Sigmoid colon (tissue), 7 donors: ENCODE measurements at regions of chr11 and their contacts with region 1.

Region 1: DNA sequence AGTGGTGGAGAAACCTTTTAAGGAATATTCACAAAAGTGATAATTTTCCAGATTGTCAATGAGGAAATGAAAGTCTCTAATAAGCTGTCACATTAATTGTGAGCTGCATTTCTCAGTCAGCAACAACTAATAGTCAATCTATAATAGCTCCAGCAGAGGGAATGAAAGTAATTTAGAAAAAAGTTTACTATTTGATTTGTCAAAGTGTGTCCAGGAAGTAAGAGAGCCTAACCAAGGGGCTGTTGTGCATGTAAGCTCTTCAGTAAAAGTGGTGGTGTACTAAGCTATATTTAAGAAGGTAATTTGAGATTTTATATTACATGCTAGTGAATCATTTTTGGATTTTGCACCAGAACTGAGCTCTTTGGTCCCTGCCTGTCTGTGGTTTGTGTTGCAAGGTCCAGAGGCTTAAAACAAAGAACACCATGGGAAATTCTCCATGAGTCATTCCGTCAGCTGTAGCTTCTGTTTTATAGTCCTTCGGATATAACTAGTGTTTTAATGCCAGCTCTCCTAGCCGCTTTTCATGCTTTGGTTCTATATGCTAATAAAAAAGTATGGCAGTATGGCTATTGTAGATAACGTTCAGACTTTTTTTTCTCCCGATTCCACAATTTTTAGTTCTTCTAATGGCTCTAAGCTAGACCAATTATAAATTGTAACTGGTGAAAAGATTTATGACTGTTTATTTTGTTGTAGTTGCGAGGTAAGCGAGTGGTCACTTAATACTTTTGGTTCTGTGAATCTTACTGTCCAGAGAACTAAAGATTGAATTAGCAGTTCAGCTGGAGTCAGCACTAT is 64.6 kb downstream of the ARHGEF12 start:
- DNase-seq: no peak
- H3K4me3 ChIP-seq: peak overlapping the region; percentile 8 to 38 (median 32)
- H3K27ac ChIP-seq: peak overlapping the region in 3 of 4 donors; percentile 62 to 80 (median 74)
- H3K4me1 ChIP-seq: peaks cover 0 to 64% (median 39%) of the 10 kb centered on the region in 4 donors
- H3K27me3 ChIP-seq: no peaks in the 10 kb centered on the region
- CTCF ChIP-seq: no peak
- EP300 ChIP-seq: no peak
- POLR2A ChIP-seq: no peak

Region 2: DNA sequence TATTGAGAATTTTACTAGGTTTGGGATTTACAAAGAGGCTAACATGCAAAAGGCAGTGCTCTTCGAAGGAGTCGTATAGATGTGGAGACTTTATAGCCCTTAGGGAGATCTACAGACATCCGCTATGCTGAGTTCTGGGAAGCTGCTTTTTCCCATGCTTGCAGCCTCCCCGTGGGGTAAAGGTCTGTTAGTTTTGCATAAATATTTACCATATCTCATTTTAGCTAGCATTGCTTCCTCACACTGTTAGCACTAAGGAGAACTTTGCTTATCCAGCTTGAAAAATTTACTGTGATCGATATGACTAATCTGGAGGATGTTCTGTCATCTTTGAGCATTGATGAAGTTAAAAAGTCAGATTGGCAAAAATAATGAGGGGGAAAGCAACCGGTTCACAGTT is 46.0 kb before region 1 on chr11:
- intact Hi-C with region 1: loop called (anchors 5 kb)
- DNase-seq: no peak
- H3K4me3 ChIP-seq: no peak overlapping the region
- H3K27ac ChIP-seq: no peak overlapping the region
- H3K4me1 ChIP-seq: peaks cover 0 to 24% (median 16%) of the 10 kb centered on the region in 4 donors
- H3K27me3 ChIP-seq: no peaks in the 10 kb centered on the region
- CTCF ChIP-seq: no peak
- EP300 ChIP-seq: no peak
- POLR2A ChIP-seq: no peak

Region 3: GRCh38 chr11:120590472-120590871 is 189.7 kb after region 1 on chr11:
- intact Hi-C with region 1: no loop called
- DNase-seq: no peak
- H3K4me3 ChIP-seq: no peak overlapping the region
- H3K27ac ChIP-seq: no peak overlapping the region
- H3K4me1 ChIP-seq: no peaks in the 10 kb centered on the region
- H3K27me3 ChIP-seq: no peaks in the 10 kb centered on the region
- CTCF ChIP-seq: no peak
- EP300 ChIP-seq: no peak
- POLR2A ChIP-seq: no peak